Heart left ventricle (tissue), 16 donors: ENCODE measurements at regions of chr17 and their contacts with region 1.

Region 1: DNA sequence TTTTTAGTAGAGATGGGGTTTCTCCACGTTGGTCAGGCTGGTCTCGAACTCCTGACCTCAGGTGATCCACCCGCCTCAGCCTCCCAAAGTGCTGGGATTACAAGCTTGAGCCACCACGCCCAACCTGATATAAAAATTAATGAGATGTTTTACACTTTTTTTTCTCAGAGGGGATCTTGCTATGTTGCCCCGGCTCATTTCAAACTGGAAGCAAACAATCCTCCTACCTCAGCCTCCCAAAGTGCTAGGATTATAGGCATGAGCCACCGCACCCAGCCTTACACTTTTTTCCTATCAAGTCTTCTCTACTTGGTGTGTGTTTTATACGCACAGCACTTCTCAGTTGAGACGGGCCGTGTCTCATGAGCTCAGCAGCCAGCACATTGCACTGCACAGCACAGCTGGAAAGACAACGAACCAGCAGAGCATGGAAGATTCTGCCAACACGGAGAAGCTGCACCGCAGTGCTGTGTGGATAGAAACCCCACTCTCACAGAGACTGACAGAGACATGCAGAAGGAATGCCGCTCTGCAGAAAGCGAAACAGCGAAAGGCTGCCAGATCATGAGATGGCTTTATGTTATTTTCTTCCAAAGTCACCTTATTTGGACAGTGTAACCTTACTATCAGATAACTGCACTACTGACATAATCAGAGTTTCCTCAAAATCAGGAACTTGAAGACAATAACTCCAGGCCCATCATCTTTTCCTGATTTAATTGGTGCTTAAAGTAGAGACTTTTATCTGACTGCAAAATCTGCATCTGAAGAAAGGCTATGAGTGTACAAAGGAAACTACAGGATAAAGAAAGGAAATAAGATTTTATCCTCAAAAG is 6.5 kb upstream of the QRICH2 start:
- DNase-seq: peak in 1 of 5 donors; percentile 38
- ATAC-seq: peak; percentile 47 to 90 (median 64)
- H3K4me3 ChIP-seq: peak overlapping the region in 5 of 12 donors; percentile 11 to 40 (median 14)
- H3K27ac ChIP-seq: peak overlapping the region in 10 of 12 donors; percentile 17 to 71 (median 68)
- H3K4me1 ChIP-seq: peaks cover 0 to 10% (median 0%) of the 10 kb centered on the region in 12 donors
- H3K27me3 ChIP-seq: no peaks in the 10 kb centered on the region
- CTCF ChIP-seq: no peak
- POLR2A ChIP-seq: no peak

Region 2: GRCh38 chr17:76240461-76241203 is 74.0 kb before region 1 on chr17 and contains the start of gene RNF157:
- intact Hi-C with region 1: no loop called
- DNase-seq: peak; percentile 62 to 84 (median 71)
- ATAC-seq: peak; percentile 75 to 91 (median 86)
- H3K4me3 ChIP-seq: peak within 1 kb of the TSS; percentile 36 to 78 (median 68)
- H3K27ac ChIP-seq: peak within 1 kb of the TSS in 9 of 12 donors; percentile 24 to 59 (median 46)
- H3K4me1 ChIP-seq: peaks cover 0 to 27% (median 9%) of the 10 kb centered on the region in 12 donors
- H3K27me3 ChIP-seq: peaks cover 0 to 37% (median 0%) of the 10 kb centered on the region in 9 donors
- CTCF ChIP-seq: no peak
- POLR2A ChIP-seq: peak in 1 of 2 donors; percentile 29
- total RNA-seq, gene RNF157: 3.9 to 7.4 (median 5.2) TPM

Region 3: GRCh38 chr17:76262732-76263344 is 51.8 kb before region 1 on chr17:
- intact Hi-C with region 1: no loop called
- DNase-seq: no peak
- ATAC-seq: no peak
- H3K4me3 ChIP-seq: no peak overlapping the region
- H3K27ac ChIP-seq: peak overlapping the region in 6 of 12 donors; percentile 34 to 96 (median 42)
- H3K4me1 ChIP-seq: peaks cover 6 to 58% (median 24%) of the 10 kb centered on the region in 12 donors
- H3K27me3 ChIP-seq: no peaks in the 10 kb centered on the region
- CTCF ChIP-seq: no peak
- POLR2A ChIP-seq: no peak

Region 4: GRCh38 chr17:76345377-76345974 is 30.9 kb after region 1 on chr17:
- intact Hi-C with region 1: loop called in 3 of 10 experiments (anchors 5 kb)
- DNase-seq: no peak
- ATAC-seq: no peak
- H3K4me3 ChIP-seq: no peak overlapping the region
- H3K27ac ChIP-seq: no peak overlapping the region
- H3K4me1 ChIP-seq: no peaks in the 10 kb centered on the region
- H3K27me3 ChIP-seq: no peaks in the 10 kb centered on the region
- CTCF ChIP-seq: no peak
- POLR2A ChIP-seq: no peak

Region 5: GRCh38 chr17:76365256-76365903 is 50.8 kb after region 1 on chr17:
- intact Hi-C with region 1: no loop called
- DNase-seq: no peak
- ATAC-seq: no peak
- H3K4me3 ChIP-seq: no peak overlapping the region
- H3K27ac ChIP-seq: no peak overlapping the region
- H3K4me1 ChIP-seq: peaks cover 0 to 34% (median 15%) of the 10 kb centered on the region in 12 donors
- H3K27me3 ChIP-seq: no peaks in the 10 kb centered on the region
- CTCF ChIP-seq: peak in 11 of 12 donors; percentile 16 to 51 (median 32)
- POLR2A ChIP-seq: no peak

Region 6: DNA sequence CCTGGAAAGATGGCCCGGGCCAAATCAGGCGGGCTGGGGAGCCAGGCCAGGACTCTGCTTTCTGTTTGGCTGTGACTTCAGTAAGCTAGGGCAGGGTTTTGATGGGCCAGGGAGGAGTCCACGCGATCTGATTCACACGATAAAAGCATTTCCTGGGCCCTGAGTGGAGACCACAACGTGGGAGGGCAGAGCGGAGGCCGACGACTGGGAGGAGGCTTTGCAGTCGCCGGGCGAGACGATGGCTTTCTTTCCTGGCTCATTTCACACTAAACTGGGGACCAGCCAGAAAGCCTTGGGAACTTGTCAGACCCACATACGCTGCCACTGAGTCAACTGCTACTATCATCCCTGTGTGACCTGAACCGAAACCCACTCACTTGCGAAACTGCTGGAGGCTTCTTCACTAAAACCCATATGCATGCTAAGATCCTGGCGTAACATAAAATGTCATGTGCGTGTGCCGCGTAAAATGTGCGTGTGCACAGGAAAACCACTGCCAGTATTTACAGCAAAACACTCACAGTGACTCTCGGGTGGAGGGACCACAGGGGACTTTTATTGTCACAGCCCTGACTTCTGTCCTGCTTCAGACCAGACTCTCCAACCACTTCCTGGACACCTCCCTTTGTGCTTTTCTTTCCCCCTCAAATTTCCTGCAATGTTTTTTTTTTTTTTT is 200.8 kb after region 1 on chr17:
- intact Hi-C with region 1: no loop called
- DNase-seq: peak in 3 of 5 donors; percentile 68 to 86 (median 85)
- ATAC-seq: peak; percentile 52 to 85 (median 75)
- H3K4me3 ChIP-seq: peak overlapping the region in 10 of 12 donors; percentile 11 to 42 (median 28)
- H3K27ac ChIP-seq: peak overlapping the region; percentile 59 to 87 (median 74)
- H3K4me1 ChIP-seq: peaks cover 0 to 54% (median 9%) of the 10 kb centered on the region in 12 donors
- H3K27me3 ChIP-seq: no peaks in the 10 kb centered on the region
- CTCF ChIP-seq: no peak
- POLR2A ChIP-seq: no peak